ENCODE measurements at regions of chr2 and their contacts with region 1.

Region 1: DNA sequence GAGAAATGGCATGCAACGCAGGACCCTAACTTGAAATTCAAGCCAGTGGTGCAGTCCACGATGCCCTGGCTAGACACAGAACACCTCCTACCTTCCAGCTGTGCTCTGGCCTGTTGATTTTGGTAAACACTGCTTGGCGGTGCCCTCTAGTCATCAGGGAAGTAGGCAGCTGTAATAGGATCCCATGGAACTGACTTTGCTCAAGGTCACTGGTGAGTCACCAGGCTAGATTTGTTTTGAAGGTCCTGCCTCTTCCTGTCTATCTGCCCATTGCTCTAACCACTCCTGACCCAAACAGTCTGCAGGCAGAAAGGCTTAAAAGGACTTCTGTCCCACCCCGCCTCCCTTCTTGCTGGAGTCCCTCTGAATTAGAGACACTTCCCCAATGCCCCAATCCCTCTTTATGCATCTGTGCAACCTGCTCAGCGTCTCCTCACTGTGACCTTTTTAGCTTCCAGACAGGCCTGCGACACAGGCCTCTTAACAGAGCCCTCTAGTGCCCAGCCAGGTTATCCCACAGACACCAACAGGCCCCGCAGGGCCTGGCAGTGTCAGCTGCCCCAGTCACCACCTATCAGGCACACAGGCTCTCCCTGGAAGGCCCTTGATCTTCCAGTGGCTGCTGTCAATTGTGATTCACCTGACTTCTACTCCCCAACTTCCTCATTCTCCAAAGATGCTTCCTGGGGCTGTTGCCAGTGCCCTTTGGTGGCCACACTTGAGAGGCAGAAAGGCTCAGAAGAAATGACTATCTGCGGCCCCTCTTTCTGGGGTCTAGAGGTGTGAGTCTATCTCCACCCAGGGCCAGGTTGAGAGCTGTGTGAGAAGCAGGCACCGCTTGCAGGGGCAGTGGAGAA is 5.2 kb downstream of the TMEM127 start:
- DNase-seq: peak; percentile 81
- ATAC-seq: peak; percentile 70

Region 2: DNA sequence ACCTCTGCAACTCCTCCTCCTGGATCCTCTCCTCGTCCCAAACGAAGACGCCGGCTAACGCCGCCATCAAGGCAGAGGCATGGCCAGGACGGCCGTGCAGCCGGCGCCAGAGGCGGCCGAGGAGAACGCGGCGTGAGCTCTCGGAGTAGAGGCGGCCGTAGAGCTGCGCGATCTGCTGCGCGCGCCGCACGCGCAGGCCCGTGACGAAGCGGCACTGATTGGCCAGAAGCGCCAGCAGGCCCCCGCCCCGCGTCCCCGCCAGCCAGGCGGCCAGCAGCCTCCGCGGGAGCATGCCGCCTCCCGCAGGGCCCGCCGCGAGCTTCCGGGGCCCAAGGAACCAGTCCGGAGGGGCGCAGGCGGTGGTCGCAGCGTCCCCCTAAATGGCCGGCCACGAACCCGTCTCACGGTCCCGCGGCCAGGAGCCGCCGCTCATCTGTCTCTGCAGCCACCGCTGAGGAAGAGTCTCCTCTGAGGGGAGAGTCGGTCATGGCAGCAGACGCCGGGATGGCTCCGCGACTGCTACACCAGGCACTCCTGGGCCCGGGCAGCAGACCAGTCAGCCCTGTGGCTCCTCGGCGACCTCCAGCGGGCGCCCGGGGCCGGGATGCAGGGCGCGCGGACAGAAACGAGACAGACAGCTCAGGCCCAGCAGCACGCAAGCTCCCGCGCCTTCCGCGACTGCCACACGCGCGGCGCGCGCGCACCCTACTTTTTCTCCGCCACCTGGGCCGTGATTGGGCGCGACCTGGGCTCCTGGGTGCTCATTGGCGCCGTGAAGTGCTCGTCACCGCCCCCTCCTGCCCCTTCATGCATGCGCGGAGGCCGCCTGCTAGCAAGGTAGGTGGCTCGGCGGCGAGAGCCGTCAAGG is 52.3 kb before region 1 on chr2 and contains the start of gene STARD7:
- intact Hi-C with region 1: loop called (anchors 2 kb)
- DNase-seq: peak; percentile 100
- ATAC-seq: peak; percentile 96
- total RNA-seq, gene STARD7: 179 TPM

Region 3: GRCh38 chr2:96359310-96359709 is 98.7 kb after region 1 on chr2:
- intact Hi-C with region 1: no loop called
- DNase-seq: peak; percentile 58
- ATAC-seq: no peak